BJ (cell line): ENCODE measurements at regions of chr17 and their contacts with region 1.

Region 1: GRCh38 chr17:69523244-69523861 is 108.9 kb downstream of the MAP2K6 start:
- DNase-seq: no peak
- H3K4me3 ChIP-seq: no peak overlapping the region
- H3K27me3 ChIP-seq: no peaks in the 10 kb centered on the region
- CTCF ChIP-seq: peak; percentile 73

Region 2: GRCh38 chr17:69327060-69327831 is 196.1 kb before region 1 on chr17 and contains the start of gene ABCA5:
- CTCF ChIA-PET with region 1: interaction called, 145 read pairs
- POLR2A ChIA-PET with region 1: no interaction called
- DNase-seq: peak; percentile 59
- H3K4me3 ChIP-seq: peak within 1 kb of the TSS; percentile 88
- H3K27me3 ChIP-seq: no peaks in the 10 kb centered on the region
- CTCF ChIP-seq: no peak
- polyA plus RNA-seq, gene ABCA5: 6.5 and 11.9 TPM in 2 replicates

Region 3: GRCh38 chr17:69539781-69540319 is 16.5 kb after region 1 on chr17:
- CTCF ChIA-PET with region 1: interaction called, 67 read pairs
- POLR2A ChIA-PET with region 1: no interaction called
- DNase-seq: peak; percentile 27
- H3K4me3 ChIP-seq: no peak overlapping the region
- H3K27me3 ChIP-seq: no peaks in the 10 kb centered on the region
- CTCF ChIP-seq: no peak

Region 4: DNA sequence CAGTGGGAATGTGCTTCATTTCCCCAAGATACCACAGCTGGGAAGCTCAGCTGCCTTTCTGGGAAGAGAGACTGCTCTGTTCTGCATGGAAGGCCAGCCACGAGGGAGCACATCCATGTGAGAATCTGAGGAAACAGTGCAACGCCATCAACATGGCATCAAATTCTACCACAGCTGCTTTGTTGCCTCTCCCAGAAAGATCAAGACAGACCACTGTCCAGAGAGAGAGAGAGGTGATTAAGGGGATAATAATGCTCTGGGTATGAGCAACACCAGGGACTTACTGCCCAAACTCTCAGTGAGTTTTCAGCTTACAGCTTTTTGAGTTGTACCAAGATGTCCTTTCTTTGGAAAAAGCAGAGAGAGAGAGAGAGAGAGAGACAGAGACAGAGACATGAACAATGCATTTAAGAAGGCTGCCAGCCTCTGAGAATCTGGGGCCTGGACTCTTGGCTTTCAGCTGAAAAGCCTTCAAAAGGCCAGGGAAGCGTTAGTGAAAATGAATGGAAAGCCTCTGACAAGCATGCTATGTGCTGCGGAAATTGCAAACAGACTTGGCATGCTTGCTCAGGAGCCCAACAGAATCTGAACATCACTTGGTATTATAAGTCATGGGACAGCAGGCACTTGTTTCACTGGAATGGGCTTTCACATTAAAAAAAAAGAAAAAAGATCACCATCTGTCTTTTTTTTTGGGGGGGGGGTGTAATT is 114.2 kb after region 1 on chr17:
- CTCF ChIA-PET with region 1: no interaction called
- POLR2A ChIA-PET with region 1: no interaction called
- DNase-seq: peak; percentile 23
- H3K4me3 ChIP-seq: no peak overlapping the region
- H3K27me3 ChIP-seq: no peaks in the 10 kb centered on the region
- CTCF ChIP-seq: no peak

Region 5: DNA sequence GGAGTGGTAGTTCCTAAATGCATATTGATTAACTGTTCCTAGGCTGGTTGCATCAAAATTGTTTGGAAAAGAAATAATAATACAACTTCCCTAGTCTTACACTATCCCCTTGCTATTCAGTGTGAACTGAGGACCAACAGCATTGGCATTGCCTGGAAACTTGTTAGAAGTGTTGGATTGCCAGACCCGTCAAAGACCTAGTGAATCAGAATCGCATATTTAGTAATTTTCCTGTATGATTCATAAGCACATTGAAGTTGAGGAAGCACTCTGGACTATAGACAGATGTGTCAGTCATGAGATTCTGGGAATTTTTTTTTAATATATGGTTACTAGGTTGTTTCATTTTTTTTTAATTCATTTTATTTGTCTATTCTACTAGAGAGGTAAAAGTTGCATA is 517.0 kb after region 1 on chr17:
- CTCF ChIA-PET with region 1: no interaction called
- POLR2A ChIA-PET with region 1: no interaction called
- DNase-seq: no peak
- H3K4me3 ChIP-seq: no peak overlapping the region
- H3K27me3 ChIP-seq: no peaks in the 10 kb centered on the region; the same call in 1 of the 2 replicates
- CTCF ChIP-seq: no peak

Region 6: GRCh38 chr17:70552230-70552981 is 1029.1 kb after region 1 on chr17:
- CTCF ChIA-PET with region 1: interaction called, 58 read pairs
- POLR2A ChIA-PET with region 1: no interaction called
- DNase-seq: no peak
- H3K4me3 ChIP-seq: no peak overlapping the region
- H3K27me3 ChIP-seq: no peaks in the 10 kb centered on the region
- CTCF ChIP-seq: peak; percentile 40